A549 (cell line): ENCODE measurements at regions of chr15 and their contacts with region 1.

Region 1: DNA sequence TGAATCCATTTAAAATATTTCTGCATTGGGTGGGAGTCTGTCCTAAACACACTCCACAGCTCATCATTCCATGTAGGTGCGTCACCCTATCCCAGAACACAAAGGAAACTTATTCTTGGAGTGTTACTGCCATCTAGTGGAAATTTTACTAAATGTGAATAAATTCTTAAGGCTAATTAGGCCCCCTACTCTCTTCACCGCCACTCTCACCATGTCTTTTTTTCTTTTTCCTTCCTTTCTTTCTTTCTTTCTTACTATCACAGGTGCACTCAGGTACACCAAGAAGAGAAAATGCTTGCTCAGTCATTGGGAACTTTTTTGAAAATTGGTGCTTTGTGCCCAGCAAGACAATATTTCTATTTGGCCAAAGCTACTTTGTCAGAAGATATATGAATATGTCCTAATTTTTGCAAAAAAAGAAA is 26.4 kb upstream of the ATP8B4 start:
- DNase-seq: peak; percentile 65 to 84
- ATAC-seq: peak; percentile 88 to 93; a peak in 5 of 6 replicates
- H3K4me3 ChIP-seq: no peak overlapping the region
- H3K27ac ChIP-seq: peak overlapping the region; percentile 49 to 68
- H3K4me1 ChIP-seq: peaks cover 28% of the 10 kb centered on the region
- CTCF ChIP-seq: peak; percentile 93
- EP300 ChIP-seq: no peak
- POLR2A ChIP-seq: no peak
- RAD21 ChIP-seq: peak; percentile 91 to 97

Region 2: DNA sequence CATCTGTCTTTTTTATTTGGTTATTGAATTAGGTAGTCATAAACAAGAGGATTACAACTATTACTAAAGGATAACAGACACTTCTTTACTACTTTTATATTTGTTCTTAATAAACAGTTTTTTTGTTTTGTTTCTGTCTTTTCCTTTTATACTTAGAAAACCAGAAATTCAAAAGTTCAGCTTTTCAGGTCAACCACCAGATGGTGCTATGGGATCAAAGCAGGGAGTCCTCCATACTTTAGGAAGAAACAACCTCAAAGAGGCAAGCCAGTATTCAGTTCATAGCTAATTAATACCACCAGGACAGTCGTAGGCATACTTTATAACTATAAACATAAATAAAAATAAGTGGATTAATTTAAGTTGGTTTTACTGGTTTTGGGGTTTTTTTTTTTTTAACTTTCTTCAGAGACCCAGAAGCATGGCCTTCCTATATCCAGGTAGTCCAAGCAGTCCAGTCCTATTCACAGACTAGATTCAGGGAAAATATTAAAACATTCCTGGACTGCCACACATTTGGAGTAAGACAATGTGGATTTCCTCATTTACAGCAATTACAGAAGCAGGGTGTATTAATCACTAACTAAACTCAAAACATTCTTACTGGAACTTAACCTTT is 1283.5 kb before region 1 on chr15:
- CTCF ChIA-PET with region 1: interaction called, 10 read pairs
- POLR2A ChIA-PET with region 1: no interaction called
- DNase-seq: peak; percentile 10 to 68
- ATAC-seq: peak; percentile 73 to 84; a peak in 4 of 6 replicates
- H3K4me3 ChIP-seq: no peak overlapping the region
- H3K27ac ChIP-seq: no peak overlapping the region
- H3K4me1 ChIP-seq: peaks cover 15% of the 10 kb centered on the region; the same call in 2 of the 3 replicates
- CTCF ChIP-seq: peak; percentile 78
- EP300 ChIP-seq: no peak
- POLR2A ChIP-seq: no peak
- RAD21 ChIP-seq: peak; percentile 91 to 92

Region 3: GRCh38 chr15:50003786-50004334 is 141.6 kb before region 1 on chr15:
- CTCF ChIA-PET with region 1: interaction called, 16 read pairs
- POLR2A ChIA-PET with region 1: no interaction called
- DNase-seq: peak; percentile 92
- ATAC-seq: peak; percentile 100
- H3K4me3 ChIP-seq: no peak overlapping the region
- H3K27ac ChIP-seq: peak overlapping the region; percentile 65 to 85
- H3K4me1 ChIP-seq: peaks cover 19% of the 10 kb centered on the region
- CTCF ChIP-seq: peak; percentile 95
- EP300 ChIP-seq: no peak
- POLR2A ChIP-seq: no peak
- RAD21 ChIP-seq: peak; percentile 98

Region 4: GRCh38 chr15:50134520-50135024 is 10.9 kb before region 1 on chr15:
- CTCF ChIA-PET with region 1: interaction called, 20 read pairs
- POLR2A ChIA-PET with region 1: no interaction called
- DNase-seq: peak; percentile 80
- ATAC-seq: peak; percentile 72 to 75
- H3K4me3 ChIP-seq: no peak overlapping the region
- H3K27ac ChIP-seq: peak overlapping the region; percentile 69 to 86
- H3K4me1 ChIP-seq: peaks cover 52% of the 10 kb centered on the region
- CTCF ChIP-seq: no peak
- EP300 ChIP-seq: peak in 1 of 2 experiments; percentile 55; a peak in 2 of 5 replicates
- POLR2A ChIP-seq: no peak
- RAD21 ChIP-seq: 0 out of 5 replicates have a peak, but pooled peaks of 1 of the 2 experiments have one; percentile 23

Region 5: GRCh38 chr15:50182219-50183013 is 37.0 kb after region 1 on chr15:
- CTCF ChIA-PET with region 1: interaction called, 43 read pairs
- POLR2A ChIA-PET with region 1: interaction called, 3 read pairs
- DNase-seq: peak; percentile 55 to 61
- ATAC-seq: peak; percentile 84 to 88
- H3K4me3 ChIP-seq: peak overlapping the region; percentile 73
- H3K27ac ChIP-seq: peak overlapping the region; percentile 76 to 88
- H3K4me1 ChIP-seq: peaks cover 27% of the 10 kb centered on the region; the same call in 2 of the 3 replicates
- CTCF ChIP-seq: peak; percentile 8; the same call in 1 of the 3 replicates
- EP300 ChIP-seq: no peak
- POLR2A ChIP-seq: peak; percentile 11; the same call in 1 of the 2 replicates
- RAD21 ChIP-seq: peak in 1 of 2 experiments; percentile 2; a peak in 3 of 5 replicates

Region 6: GRCh38 chr15:50256188-50257041 is 111.0 kb after region 1 on chr15:
- CTCF ChIA-PET with region 1: interaction called, 10 read pairs
- POLR2A ChIA-PET with region 1: no interaction called
- DNase-seq: peak in 1 of 2 experiments; percentile 84
- ATAC-seq: peak in 1 of 2 experiments; percentile 85; a peak in 3 of 6 replicates
- H3K4me3 ChIP-seq: no peak overlapping the region
- H3K27ac ChIP-seq: peak overlapping the region; percentile 44 to 67; a peak in 4 of 6 replicates
- H3K4me1 ChIP-seq: peaks cover 35% of the 10 kb centered on the region
- CTCF ChIP-seq: no peak
- EP300 ChIP-seq: peak in 1 of 2 experiments; percentile 28; a peak in 1 of 5 replicates
- POLR2A ChIP-seq: no peak
- RAD21 ChIP-seq: no peak; a peak in 1 of 5 replicates

Region 7: DNA sequence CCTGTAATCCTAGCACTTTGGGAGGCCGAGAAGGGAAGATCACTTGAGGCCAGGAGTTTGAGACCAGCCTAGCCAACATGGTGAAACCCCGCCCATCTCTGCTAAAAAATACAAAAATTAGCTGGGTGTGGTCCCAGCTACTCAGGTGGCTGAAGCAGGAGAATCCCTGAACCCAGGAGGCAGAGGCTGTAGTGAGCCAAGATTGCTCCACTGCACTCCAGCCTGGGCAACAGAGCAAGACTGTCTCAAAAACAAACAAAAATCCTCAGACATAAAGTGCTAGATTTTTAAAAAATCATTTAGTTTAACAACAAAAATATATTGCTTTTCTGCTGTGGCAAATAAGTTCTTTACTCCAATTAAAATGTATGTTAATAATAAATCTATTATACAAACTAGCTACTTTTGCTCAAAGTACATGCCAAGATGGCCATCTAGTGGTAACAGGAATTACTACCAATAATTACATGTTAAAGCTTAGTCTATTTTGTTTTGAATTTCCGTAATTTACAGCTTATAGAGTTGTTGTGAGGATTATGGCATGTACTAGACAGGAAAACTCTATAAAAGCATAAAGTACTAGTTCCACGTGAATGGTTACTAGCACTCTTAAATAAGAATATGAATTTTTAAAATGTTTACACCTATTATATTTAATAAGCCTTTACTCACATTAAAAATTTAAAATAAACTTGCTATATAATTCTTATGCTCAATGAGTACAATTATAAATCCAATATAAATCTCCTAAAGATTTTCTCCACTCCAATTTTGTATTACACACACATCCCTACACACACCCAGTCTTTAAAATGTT is 170.6 kb after region 1 on chr15:
- CTCF ChIA-PET with region 1: interaction called, 67 read pairs
- POLR2A ChIA-PET with region 1: interaction called, 4 read pairs
- DNase-seq: peak; percentile 25 to 65
- ATAC-seq: peak; percentile 30 to 77; a peak in 3 of 6 replicates
- H3K4me3 ChIP-seq: no peak overlapping the region
- H3K27ac ChIP-seq: peak overlapping the region; percentile 11 to 56; a peak in 4 of 6 replicates
- H3K4me1 ChIP-seq: peaks cover 25% of the 10 kb centered on the region
- CTCF ChIP-seq: peak; percentile 94
- EP300 ChIP-seq: no peak
- POLR2A ChIP-seq: no peak
- RAD21 ChIP-seq: peak; percentile 92 to 96